CD4-positive, alpha-beta memory T cell (primary cell): ENCODE measurements at regions of chr10 and their contacts with region 1.

Region 1: GRCh38 chr10:101840741-101841453 is 2.7 kb downstream of the KCNIP2 start:
- DNase-seq: peak; percentile 61 to 72 (median 65)
- H3K4me3 ChIP-seq: peak overlapping the region; percentile 17 to 34
- H3K4me3 Mint-ChIP-seq: peak overlapping the region; percentile 82 to 99 (median 90)
- H3K27ac ChIP-seq: no peak overlapping the region
- H3K27ac Mint-ChIP-seq: peak overlapping the region in 6 of 7 donors; percentile 30 to 92 (median 78)
- H3K4me1 ChIP-seq: peaks cover 41% of the 10 kb centered on the region
- H3K4me1 Mint-ChIP-seq: peaks cover 29 to 62% (median 42%) of the 10 kb centered on the region in 4 donors
- H3K27me3 ChIP-seq: no peaks in the 10 kb centered on the region
- H3K27me3 Mint-ChIP-seq: no peaks in the 10 kb centered on the region

Region 2: GRCh38 chr10:101602761-101603398 is 238.0 kb before region 1 on chr10:
- CTCF ChIA-PET with region 1: no interaction called
- POLR2A ChIA-PET with region 1: no interaction called
- intact Hi-C with region 1: loop called (anchors 2 kb)
- DNase-seq: peak; percentile 33 to 58 (median 41)
- H3K4me3 ChIP-seq: no peak overlapping the region
- H3K4me3 Mint-ChIP-seq: no peak overlapping the region
- H3K27ac ChIP-seq: no peak overlapping the region
- H3K27ac Mint-ChIP-seq: peak overlapping the region in 3 of 7 donors; percentile 4 to 31 (median 27)
- H3K4me1 ChIP-seq: no peaks in the 10 kb centered on the region
- H3K4me1 Mint-ChIP-seq: no peaks in the 10 kb centered on the region
- H3K27me3 ChIP-seq: no peaks in the 10 kb centered on the region
- H3K27me3 Mint-ChIP-seq: no peaks in the 10 kb centered on the region

Region 3: DNA sequence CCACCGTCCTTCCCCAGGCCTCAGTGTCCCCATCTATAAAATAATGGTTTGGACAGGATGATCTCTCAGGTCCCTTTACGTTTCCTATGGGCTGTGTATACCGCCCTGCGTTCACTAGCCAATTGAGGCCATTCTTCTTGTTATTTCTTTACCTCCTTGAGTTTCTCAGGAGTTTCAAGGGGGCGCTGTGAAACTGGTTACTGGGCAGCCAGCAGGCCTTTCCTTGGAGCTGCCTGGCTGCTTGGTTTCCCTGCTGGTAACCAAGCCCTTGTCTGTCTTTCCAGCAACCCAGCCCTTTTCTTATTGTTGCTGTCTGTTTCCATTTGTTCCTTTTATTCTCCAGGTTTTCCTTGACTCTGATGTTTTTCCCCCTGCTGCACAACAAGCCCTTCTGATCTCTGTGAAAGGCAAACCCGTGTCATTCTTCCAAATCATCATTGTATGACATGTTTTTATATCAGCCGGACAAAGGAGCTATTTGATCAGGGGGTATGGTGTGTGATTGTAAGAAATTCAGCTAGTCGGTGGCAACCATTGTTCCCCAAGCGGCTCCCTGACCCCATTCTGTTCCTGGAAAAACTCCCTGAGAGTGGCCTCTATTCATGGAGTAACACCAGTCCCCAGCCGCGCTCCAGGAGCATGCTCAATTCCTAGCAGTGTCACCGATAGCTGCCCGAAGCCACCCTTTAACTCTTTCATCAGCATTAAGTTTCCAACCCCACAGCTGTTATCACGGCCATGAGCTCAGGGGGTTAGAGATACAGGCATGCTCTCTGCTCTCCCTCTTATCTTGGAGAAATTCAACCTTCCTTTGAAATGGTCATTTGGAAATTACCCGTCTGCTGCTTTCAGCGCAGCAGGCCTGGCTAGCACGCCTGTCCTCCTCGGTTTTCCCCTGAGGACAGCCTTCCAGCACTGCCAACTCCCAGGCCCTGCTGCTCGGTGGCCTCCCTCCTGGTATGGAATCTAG is 91.6 kb before region 1 on chr10:
- CTCF ChIA-PET with region 1: no interaction called
- POLR2A ChIA-PET with region 1: no interaction called
- intact Hi-C with region 1: no loop called
- DNase-seq: no peak
- H3K4me3 ChIP-seq: no peak overlapping the region
- H3K4me3 Mint-ChIP-seq: no peak overlapping the region
- H3K27ac ChIP-seq: no peak overlapping the region
- H3K27ac Mint-ChIP-seq: no peak overlapping the region
- H3K4me1 ChIP-seq: no peaks in the 10 kb centered on the region
- H3K4me1 Mint-ChIP-seq: no peaks in the 10 kb centered on the region
- H3K27me3 ChIP-seq: no peaks in the 10 kb centered on the region
- H3K27me3 Mint-ChIP-seq: peaks cover 7 to 12% of the 10 kb centered on the region in 2 donors

Region 4: DNA sequence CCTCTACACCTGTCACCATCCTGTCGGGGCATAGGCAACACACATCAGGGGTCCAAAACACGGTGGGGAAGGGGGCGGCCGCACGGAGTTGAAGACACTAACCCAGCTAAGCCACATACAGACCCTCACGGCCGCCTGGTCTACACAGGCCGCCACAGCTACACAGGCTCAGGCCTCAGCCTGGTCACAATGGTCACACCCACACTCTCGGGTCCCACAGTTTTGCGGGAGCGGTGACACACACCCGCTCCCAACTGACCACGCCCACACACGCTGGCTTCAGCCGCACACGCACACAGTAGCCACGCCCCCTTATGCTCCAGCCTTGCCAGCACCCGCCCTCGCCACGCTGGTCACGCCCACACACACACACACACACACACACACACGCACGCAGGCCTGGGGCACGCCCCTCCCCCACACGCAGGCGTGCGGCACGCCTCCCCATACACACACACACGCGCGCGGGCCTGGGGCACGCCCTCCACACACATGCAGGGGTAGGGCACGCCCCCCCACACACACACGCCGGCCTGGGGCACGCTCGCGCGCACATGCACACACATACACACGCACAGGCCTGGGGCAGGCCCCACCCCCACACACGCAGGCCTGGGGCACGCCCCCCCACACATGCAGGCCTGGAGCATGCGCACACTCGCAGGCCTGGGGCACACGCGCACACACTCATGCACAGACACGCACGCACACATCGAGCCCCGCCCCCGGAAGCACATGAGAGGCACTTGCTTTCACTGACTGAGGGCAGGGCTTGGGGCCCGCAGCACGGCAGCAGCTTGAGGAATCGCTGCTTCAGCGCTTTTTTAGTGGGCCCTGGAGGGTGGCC is 10.4 kb before region 1 on chr10:
- CTCF ChIA-PET with region 1: interaction called, 88 read pairs
- POLR2A ChIA-PET with region 1: interaction called, 29 read pairs
- intact Hi-C with region 1: loop called (anchors 1 kb)
- DNase-seq: peak; percentile 95 to 98 (median 97)
- H3K4me3 ChIP-seq: peak overlapping the region; percentile 57 to 68
- H3K4me3 Mint-ChIP-seq: peak overlapping the region; percentile 84 to 93 (median 88)
- H3K27ac ChIP-seq: peak overlapping the region; percentile 87
- H3K27ac Mint-ChIP-seq: peak overlapping the region; percentile 98 to 100 (median 99)
- H3K4me1 ChIP-seq: peaks cover 59% of the 10 kb centered on the region
- H3K4me1 Mint-ChIP-seq: peaks cover 44 to 80% (median 57%) of the 10 kb centered on the region in 4 donors
- H3K27me3 ChIP-seq: no peaks in the 10 kb centered on the region
- H3K27me3 Mint-ChIP-seq: peaks cover 2 to 7% of the 10 kb centered on the region in 2 donors

Region 5: DNA sequence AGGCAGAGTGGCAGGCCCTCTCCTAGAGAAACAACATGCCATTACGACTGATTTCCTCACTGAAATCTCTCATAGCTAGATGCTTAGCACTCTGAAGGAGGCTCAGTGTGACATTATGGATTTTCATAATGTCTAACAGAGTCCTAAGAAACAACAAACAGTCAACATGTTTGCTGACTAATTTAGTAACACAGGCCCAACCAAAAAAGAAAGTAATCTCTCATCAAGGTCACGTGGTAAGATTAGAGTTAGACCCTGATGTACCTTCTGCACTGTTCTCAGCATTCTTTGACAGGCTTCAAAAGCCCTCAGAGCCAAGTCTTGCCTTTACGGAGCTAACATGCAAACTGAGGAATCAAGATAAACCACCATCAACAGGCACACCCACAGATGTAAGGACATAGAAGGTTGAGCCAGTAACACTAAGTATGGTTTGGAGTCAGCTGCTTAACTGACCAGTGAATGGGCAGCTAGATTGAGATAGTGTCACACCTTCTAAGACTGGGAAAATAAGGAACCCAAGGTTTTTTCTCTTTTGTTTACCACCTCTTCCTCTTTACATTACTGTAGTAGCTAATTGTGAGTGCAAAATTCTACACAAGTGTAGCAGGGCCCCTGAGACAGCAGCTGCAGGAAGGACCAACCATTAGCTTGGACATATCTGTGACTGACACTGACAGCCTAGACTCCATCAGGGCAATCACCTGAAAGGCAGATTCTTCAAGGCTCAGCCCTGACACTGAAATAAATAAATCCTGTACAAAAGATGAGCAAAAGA is 18.0 kb after region 1 on chr10:
- CTCF ChIA-PET with region 1: interaction called, 74 read pairs
- POLR2A ChIA-PET with region 1: no interaction called
- intact Hi-C with region 1: no loop called
- DNase-seq: no peak
- H3K4me3 ChIP-seq: no peak overlapping the region
- H3K4me3 Mint-ChIP-seq: peak overlapping the region in 1 of 8 donors; percentile 47
- H3K27ac ChIP-seq: no peak overlapping the region
- H3K27ac Mint-ChIP-seq: peak overlapping the region in 2 of 7 donors; percentile 75 to 90
- H3K4me1 ChIP-seq: peaks cover 7% of the 10 kb centered on the region
- H3K4me1 Mint-ChIP-seq: peaks cover 8 to 17% (median 9%) of the 10 kb centered on the region in 4 donors
- H3K27me3 ChIP-seq: no peaks in the 10 kb centered on the region
- H3K27me3 Mint-ChIP-seq: no peaks in the 10 kb centered on the region

Region 6: DNA sequence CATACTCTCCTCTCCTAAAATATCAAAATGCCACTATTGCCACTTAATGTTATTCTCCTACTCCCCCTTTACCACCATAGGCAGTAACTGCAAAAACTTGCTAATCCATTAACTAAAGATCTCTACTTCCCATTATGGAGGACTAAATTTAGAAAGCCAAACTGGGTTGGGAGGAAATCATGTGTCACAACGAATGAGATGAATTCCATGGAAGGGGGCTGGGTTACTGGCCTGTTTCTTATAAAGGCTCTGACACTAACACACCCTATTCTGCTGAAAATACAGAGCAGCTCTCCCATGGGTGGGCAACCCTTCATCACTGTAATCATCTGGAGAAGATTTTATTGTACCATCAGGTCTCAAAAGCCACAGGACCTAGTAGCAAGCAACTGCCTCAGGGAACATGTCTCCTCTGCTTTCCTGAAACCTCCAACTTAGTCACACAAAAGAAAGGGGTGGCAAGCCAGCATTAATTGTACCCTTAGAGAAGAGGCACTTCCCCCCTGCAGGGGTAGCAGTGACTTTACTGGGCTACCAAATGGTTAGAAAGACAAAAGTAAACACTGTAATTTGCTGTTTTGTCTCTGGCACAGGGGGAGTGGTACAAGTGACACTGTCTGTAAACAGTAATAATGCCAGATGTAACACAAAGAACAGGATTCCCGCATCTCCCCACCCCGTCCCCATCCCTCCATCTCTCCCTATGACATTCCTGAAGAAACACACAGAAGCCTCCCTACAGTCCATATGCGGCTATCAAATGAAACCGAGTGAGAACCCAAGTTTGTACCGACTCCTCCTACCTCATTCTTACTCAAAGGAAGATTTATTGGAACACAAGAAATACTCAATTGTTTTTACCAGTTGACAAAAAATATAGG is 133.4 kb after region 1 on chr10:
- CTCF ChIA-PET with region 1: interaction called, 11 read pairs
- POLR2A ChIA-PET with region 1: no interaction called
- intact Hi-C with region 1: no loop called
- DNase-seq: no peak
- H3K4me3 ChIP-seq: no peak overlapping the region
- H3K4me3 Mint-ChIP-seq: peak overlapping the region in 7 of 8 donors; percentile 67 to 87 (median 83)
- H3K27ac ChIP-seq: peak overlapping the region; percentile 31
- H3K27ac Mint-ChIP-seq: peak overlapping the region; percentile 54 to 93 (median 81)
- H3K4me1 ChIP-seq: peaks cover 18% of the 10 kb centered on the region
- H3K4me1 Mint-ChIP-seq: peaks cover 19 to 42% (median 28%) of the 10 kb centered on the region in 4 donors
- H3K27me3 ChIP-seq: no peaks in the 10 kb centered on the region
- H3K27me3 Mint-ChIP-seq: no peaks in the 10 kb centered on the region

Region 7: GRCh38 chr10:102072673-102073527 is 232.0 kb after region 1 on chr10:
- CTCF ChIA-PET with region 1: interaction called, 54 read pairs
- POLR2A ChIA-PET with region 1: interaction called, 5 read pairs
- intact Hi-C with region 1: loop called (anchors 1 kb)
- DNase-seq: peak; percentile 67 to 76 (median 75)
- H3K4me3 ChIP-seq: no peak overlapping the region
- H3K4me3 Mint-ChIP-seq: no peak overlapping the region
- H3K27ac ChIP-seq: no peak overlapping the region
- H3K27ac Mint-ChIP-seq: no peak overlapping the region
- H3K4me1 ChIP-seq: peaks cover 14% of the 10 kb centered on the region
- H3K4me1 Mint-ChIP-seq: peaks cover 3 to 17% (median 7%) of the 10 kb centered on the region in 4 donors
- H3K27me3 ChIP-seq: no peaks in the 10 kb centered on the region
- H3K27me3 Mint-ChIP-seq: no peaks in the 10 kb centered on the region